ENCODE measurements at regions of chr18 and their contacts with region 1.

Region 1: DNA sequence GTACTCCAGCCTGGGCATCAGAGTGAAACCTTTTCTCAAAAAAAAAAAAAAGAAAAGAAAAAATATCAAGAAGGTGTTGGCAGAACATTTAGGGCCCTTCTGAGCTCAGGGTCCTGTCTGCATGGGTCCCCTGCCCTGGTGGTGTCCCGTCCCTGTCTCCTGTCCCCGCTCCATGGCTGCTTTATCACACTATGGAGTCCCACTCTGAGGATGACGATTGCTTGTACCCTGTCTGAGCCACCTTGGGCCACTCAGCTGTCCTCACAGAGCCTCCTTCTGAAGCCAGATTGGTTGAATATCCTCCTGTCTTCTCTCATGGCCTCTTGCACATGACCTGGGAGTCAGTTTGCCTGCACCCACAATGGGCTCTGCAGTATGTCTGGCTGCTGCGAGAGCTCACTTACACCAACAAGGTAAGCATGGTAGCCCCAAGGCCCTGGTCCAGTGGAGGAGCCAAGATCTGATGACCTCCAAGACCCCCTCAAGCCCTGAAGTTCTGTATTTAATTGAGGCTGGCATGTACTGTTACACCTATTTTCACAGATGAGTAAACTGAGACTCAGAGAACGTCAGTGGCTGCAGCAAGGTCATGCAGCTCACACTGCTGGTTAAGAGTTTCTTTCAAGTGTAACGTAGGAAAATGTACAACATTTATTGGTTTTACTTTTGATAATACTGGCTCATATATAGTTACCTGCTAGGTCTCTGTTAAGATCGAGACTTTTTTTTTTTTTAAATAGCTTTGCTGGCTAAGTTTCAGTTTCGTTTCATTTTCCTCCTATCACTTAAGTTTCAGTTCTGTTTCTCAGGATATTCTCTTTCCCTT is 16.9 kb upstream of the ZCCHC2 start:
- DNase-seq: peak in 1 of 2 donors; percentile 69
- ATAC-seq: peak; percentile 70 to 82 (median 79)
- H3K4me3 ChIP-seq: peak overlapping the region; percentile 36
- H3K4me3 Mint-ChIP-seq: peak overlapping the region; percentile 92
- H3K27ac ChIP-seq: peak overlapping the region; percentile 76
- H3K27ac Mint-ChIP-seq: peak overlapping the region; percentile 88 to 93
- H3K4me1 ChIP-seq: peaks cover 14% of the 10 kb centered on the region
- H3K4me1 Mint-ChIP-seq: peaks cover 11 to 13% of the 10 kb centered on the region in 2 donors
- H3K27me3 ChIP-seq: no peaks in the 10 kb centered on the region
- H3K27me3 Mint-ChIP-seq: no peaks in the 10 kb centered on the region
- CTCF ChIP-seq: no peak

Region 2: GRCh38 chr18:62522504-62523254 is 16.8 kb after region 1 on chr18 and contains the start of gene ZCCHC2:
- intact Hi-C with region 1: loop called (anchors 2 kb)
- DNase-seq: peak; percentile 99
- ATAC-seq: peak; percentile 78 to 91 (median 81)
- H3K4me3 ChIP-seq: peak within 1 kb of the TSS; percentile 82
- H3K4me3 Mint-ChIP-seq: peak within 1 kb of the TSS; percentile 91
- H3K27ac ChIP-seq: peak within 1 kb of the TSS; percentile 91
- H3K27ac Mint-ChIP-seq: peak within 1 kb of the TSS; percentile 89 to 93
- H3K4me1 ChIP-seq: peaks cover 16% of the 10 kb centered on the region
- H3K4me1 Mint-ChIP-seq: peaks cover 23 to 28% of the 10 kb centered on the region in 2 donors
- H3K27me3 ChIP-seq: no peaks in the 10 kb centered on the region
- H3K27me3 Mint-ChIP-seq: peaks cover 0 to 7% of the 10 kb centered on the region in 2 donors
- CTCF ChIP-seq: no peak
- total RNA-seq, gene ZCCHC2: 50.4 to 81.2 (median 59.6) TPM

Measured in natural killer cell (primary cell).